ENCODE measurements at regions of chrX and their contacts with region 1.

Region 1: GRCh38 chrX:129637217-129638109 is 17.3 kb downstream of the APLN start:
- DNase-seq: peak; percentile 80
- H3K4me3 ChIP-seq: no peak overlapping the region
- H3K27ac ChIP-seq: no peak overlapping the region
- H3K4me1 ChIP-seq: no peaks in the 10 kb centered on the region
- H3K27me3 ChIP-seq: no peaks in the 10 kb centered on the region
- CTCF ChIP-seq: peak; percentile 83 to 86 (median 84)
- POLR2A ChIP-seq: no peak

Region 2: GRCh38 chrX:129726307-129727111 is 89.0 kb after region 1 on chrX:
- intact Hi-C with region 1: loop called (anchors 10 kb)
- DNase-seq: peak; percentile 66
- H3K4me3 ChIP-seq: no peak overlapping the region
- H3K27ac ChIP-seq: no peak overlapping the region
- H3K4me1 ChIP-seq: no peaks in the 10 kb centered on the region
- H3K27me3 ChIP-seq: no peaks in the 10 kb centered on the region
- CTCF ChIP-seq: peak; percentile 54 to 73 (median 62)
- POLR2A ChIP-seq: no peak

Measured in testis (tissue), 5 donors.